Posterior cingulate gyrus (tissue), 11 donors: ENCODE measurements at regions of chr2 and their contacts with region 1.

Region 1: DNA sequence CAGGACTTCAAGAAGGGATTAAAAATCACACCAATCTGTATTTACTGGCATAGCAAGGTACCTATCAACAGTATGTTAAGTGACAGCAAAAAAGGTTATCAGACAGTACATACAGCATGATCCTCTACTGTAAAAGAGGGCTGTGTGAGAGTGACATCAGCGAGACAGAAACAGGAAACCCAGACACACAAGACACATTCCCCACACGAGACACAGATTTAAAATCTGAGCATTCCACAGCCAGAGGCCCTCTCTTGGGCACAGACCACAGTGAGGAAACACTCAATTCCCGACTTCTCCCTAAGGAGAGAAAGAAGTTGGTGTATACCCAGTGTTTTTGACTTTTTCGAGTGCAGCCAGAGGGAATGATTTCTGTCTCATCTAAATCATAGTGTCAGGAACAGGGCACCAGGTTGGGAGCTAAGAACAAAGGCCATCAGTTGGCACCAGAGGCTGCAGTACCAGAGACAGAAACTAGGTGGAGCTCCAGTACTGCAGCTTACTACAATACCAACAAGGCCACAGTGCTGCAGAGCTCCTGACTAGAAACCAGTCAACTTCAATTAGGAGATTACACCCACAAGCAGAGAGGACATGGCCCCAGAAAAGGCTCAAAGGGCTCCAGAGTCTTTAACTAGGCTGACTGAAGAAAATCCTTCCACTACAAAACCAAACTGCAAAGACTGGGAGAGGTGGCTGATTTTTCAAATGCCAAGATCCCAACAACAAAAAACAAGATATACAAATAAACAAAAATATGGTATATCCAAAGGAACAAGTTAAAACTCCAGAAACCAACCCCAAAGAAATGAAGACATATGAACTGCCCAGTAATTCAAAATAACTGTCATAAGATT is 41.0 kb downstream of the UNC50 start:
- DNase-seq: peak in 9 of 10 donors; percentile 47 to 95 (median 83)

Region 2: GRCh38 chr2:97761192-97761591 is 888.2 kb before region 1 on chr2:
- intact Hi-C with region 1: no loop called
- DNase-seq: peak in 1 of 10 donors; percentile 67

Region 3: DNA sequence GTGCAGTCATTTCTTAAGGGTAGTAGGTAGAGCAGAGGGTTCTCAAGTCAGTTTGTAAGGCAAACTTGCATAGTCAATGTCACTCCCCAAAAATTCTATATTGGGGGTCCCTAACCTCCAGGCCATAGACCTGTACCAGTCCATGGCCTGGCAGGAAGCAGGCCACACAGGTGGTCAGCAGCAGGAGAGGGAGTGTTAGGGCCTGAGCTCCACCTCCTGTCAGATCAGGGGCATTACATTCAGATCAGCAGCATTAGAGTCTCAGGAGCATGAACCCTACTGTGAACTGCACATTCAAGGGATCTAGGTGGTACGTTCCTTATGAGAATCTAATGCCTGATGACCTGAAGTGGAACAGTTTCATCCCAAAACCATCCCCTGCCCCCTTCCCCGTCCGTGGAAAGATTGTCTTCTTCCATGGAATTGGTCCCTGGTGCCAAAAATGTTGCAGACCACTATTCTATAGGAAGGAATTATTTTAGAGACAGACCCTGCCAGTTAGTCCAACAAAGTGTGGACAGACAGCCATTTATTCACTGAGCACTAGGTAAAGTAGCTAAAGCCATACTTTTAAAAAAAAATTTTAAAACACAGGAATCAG is 47.7 kb before region 1 on chr2:
- intact Hi-C with region 1: no loop called
- DNase-seq: no peak

Region 4: GRCh38 chr2:98835831-98836385 is 186.5 kb after region 1 on chr2:
- intact Hi-C with region 1: loop called (anchors 1 kb)
- DNase-seq: no peak